Head of caudate nucleus (tissue), 42 donors: ENCODE measurements at regions of chr4 and their contacts with region 1.

Region 1: DNA sequence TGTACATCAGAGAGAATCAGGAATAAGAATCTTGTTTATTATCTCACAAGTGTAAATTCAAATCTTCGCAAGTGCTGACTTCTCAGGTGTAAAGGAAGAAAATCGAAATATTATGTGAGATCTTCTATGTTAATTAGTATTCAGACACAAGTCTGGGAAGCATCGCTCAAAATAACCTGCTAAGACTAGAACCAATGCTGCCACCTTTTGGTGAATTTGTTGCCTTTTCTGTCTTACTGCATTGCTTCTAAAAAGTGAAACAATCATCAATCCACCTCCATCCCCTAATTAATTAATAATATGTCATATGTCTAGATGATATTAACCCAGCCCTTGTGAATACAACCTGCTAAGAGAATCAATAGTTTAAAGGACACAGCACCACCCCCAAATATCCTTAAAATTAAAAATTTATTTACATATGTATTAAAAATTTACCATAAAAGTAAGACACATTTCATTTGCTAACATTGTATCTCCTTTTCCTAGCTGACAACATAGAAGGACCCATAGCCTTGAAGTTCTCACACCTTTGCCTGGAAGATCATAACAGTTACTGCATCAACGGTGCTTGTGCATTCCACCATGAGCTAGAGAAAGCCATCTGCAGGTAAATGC is 3.5 kb downstream of the EPGN start:
- DNase-seq: peak in 22 of 42 donors; percentile 15 to 77 (median 46)

Region 2: DNA sequence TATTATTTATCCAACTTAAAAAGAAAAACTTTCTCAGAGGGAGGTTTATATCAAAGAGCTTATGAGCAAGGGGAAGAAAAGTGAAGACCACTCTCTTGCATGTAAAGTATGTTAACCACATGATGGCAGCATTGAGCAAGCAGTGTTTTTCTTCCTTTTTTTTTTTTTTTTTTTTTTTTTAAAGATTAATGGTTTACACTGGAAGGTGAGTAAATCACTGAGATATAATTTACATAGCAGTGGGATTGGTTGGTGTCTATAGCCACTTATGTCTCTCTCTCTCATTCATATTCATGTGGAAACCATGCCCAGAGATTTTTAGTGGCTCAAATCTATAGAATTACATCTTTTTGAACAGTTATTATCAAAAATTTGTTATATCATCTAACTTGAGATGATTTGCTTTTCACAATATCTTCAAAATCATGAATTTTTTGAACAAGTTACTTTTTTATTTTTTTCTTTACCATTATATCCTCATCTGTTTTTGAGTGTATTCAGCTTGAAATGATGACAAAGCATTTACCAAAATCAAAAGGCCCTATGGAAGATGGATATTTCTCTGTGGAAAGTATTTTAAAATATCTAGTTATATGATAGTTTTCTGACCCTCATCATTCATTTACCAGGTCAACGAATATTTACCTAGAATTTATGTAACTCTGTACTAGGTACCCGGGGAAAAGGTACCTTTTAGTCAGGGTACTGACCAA is 122.3 kb before region 1 on chr4:
- intact Hi-C with region 1: loop called (anchors 5 kb)
- DNase-seq: peak in 2 of 42 donors; percentile 9 to 21